ENCODE measurements at regions of chr20 and their contacts with region 1.

Region 1: DNA sequence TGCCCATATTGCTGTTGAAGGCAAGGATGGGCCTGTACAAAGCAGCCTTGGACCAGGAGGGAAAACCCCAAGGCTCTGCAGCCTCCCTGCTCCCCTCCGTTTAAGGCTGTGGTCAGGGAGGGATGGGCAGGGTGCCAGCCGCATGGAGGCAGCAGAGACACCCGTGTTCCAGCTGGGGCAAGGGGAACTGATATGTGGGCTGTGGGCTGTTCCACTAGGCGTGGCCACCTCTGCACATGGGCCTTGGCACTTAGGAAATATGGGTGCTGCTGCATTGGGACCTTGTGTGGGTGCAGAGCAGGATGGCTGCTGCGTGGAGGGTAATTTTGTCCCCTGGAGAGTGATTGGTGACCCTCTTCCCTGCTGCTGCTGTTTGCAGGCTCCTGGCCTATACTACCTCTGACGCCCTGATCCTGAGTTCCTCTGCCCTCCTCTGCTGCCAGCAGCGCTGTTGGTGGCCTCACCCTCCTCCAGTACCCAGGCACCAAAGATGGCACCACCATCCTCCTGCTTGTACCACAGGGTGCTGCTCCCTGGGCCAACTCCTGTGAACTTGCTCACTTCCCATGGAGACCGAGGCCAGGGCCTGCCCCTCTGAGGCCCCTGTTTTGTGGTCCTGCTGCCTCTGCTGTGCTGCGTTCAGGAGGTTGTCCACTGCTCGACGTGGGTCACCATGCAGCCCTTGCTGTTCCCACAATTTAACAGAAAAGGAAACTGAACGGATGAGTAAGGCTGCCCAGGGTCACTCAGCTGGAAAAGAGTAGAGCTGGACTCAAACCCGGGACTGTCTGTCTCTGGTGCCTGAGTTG is 35.3 kb downstream of the PANK2 start:
- DNase-seq: no peak
- H3K4me3 ChIP-seq: no peak overlapping the region
- H3K27ac ChIP-seq: no peak overlapping the region
- H3K27me3 ChIP-seq: no peaks in the 10 kb centered on the region
- CTCF ChIP-seq: no peak

Region 2: GRCh38 chr20:3970016-3970415 is 45.5 kb after region 1 on chr20:
- in situ Hi-C with region 1: no loop called
- DNase-seq: no peak
- H3K4me3 ChIP-seq: no peak overlapping the region
- H3K27ac ChIP-seq: no peak overlapping the region
- H3K27me3 ChIP-seq: no peaks in the 10 kb centered on the region
- CTCF ChIP-seq: no peak

Region 3: DNA sequence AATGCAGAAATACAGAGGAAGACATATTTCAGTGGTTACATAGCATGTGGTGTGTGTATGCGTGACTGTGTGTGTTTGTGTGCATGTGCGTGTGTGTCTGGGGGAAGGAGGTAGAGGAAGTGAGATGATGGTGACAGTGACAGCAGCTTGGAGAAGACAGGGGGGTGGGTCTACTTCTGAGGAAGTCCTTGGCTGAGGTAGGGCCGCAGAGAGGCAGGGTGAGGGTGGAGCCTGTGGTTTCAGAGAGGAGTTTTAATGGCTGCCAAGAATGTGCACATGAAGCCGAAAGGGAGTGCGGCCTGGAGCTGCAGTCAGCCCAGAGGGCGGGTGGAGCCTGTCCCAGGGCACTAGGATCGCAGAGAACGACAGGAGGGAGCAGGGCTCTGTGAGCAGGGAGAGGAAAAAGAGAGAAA is 113.5 kb after region 1 on chr20:
- in situ Hi-C with region 1: no loop called
- DNase-seq: peak; percentile 39
- H3K4me3 ChIP-seq: no peak overlapping the region
- H3K27ac ChIP-seq: no peak overlapping the region
- H3K27me3 ChIP-seq: no peaks in the 10 kb centered on the region
- CTCF ChIP-seq: no peak

Region 4: DNA sequence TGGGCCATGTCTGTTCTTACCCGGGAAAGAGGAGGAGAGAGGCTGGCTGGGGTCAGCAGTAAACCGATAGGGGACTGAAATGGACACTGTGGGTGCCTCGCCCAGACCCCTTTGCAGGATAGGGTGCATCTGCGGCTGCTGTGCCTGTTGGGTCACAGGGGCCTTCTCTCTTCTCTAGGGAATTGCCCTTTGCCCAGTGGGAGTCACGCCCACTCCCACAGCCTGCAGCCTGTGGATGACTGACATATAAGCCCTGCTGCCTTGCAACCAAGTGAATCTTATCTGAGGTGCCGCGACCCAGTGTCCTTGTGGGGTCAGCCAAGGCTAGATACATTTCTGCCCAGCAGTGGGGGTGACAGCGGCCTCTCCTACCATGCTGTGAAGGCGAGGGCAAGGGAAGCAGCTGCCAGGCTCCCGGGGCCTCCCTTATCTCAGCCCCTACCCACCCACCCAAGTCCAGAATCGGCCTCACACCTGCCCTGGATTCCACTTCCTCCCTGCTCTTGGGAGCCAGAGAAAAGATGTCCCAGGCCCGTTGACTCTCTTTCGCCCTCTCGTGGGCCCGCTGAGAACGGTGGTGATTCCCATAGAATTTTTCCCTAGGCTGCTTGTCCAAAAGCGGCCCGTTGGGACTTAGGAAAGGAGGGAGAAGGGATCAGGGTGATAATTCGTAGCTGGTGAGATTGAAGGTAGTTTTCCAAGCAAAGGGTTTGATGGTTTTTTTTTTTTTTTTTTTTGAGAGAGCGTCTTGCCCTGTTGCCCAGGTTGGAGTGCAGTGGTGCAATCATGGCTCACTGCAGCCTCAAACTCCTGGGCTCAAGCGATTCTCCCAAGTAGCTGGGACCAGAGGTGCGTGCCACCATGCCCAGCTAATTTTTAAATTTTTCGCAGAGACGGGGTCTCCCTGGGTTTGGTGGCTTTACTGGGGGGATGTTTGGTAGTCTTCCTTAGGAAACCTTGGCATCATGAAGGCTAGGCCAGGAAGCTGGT is 167.3 kb after region 1 on chr20:
- in situ Hi-C with region 1: loop called (anchors 25 kb)
- DNase-seq: peak; percentile 50
- H3K4me3 ChIP-seq: no peak overlapping the region
- H3K27ac ChIP-seq: peak overlapping the region; percentile 96
- H3K27me3 ChIP-seq: no peaks in the 10 kb centered on the region
- CTCF ChIP-seq: peak; percentile 90